ENCODE measurements at regions of chr22 and their contacts with region 1.

Region 1: DNA sequence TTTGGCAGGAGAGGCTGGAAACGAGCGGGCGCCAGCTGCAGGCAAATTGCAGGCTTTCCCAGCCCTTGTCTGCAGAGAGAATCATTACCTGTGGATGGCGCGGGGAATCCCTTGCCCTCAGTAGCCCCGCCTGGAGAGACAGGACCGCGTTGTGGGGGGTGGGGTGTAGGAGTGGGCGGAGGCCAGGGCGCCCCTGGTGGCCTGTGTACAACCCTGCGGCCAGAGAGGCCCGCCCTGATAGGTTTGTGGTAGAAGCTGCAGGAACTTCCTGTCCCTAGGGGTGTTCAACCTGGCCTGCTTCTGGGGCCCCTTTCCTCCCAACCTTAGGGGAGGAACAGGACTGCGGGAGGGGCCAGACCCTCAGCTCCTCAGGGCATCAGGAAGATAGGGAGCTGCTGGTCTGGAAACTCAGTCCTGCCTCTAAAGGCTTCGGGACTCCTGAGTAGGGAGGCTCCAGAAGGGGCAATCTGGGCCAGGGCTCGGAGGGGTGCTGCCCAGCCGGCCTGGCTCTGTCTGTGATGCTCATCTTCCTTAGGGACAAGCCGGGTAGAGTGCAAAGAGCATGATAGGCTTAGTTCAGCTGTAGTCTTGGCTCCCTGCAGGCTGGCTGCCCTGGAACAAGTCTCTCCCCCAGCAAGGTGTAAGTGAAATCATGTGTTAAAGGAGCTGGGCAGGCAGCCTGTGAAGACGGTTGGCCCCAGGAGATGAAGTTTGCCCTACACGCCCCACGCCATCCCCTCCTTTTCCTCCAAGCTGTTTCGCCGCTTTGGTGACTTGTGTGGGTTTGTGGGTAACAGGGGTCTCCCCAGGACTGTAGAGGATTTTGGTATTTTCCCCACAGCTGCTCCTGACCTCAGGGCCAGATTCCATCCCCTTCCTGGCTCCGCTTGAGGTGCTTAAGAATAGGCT is 24.1 kb upstream of the SUSD2 start:
- DNase-seq: peak; percentile 87 to 94 (median 87)
- H3K4me3 ChIP-seq: peak overlapping the region; percentile 92 to 96
- H3K4me3 Mint-ChIP-seq: peak overlapping the region; percentile 92 to 99 (median 94)
- H3K27ac ChIP-seq: peak overlapping the region; percentile 67
- H3K27ac Mint-ChIP-seq: peak overlapping the region; percentile 90 to 98 (median 93)
- H3K4me1 ChIP-seq: peaks cover 64% of the 10 kb centered on the region
- H3K4me1 Mint-ChIP-seq: peaks cover 36 to 88% (median 63%) of the 10 kb centered on the region in 4 donors
- H3K27me3 ChIP-seq: no peaks in the 10 kb centered on the region
- H3K27me3 Mint-ChIP-seq: no peaks in the 10 kb centered on the region

Region 2: GRCh38 chr22:24011735-24012068 is 145.5 kb before region 1 on chr22:
- CTCF ChIA-PET with region 1: interaction called, 4 read pairs
- POLR2A ChIA-PET with region 1: interaction called, 42 read pairs
- intact Hi-C with region 1: no loop called
- DNase-seq: peak in 1 of 5 donors; percentile 6
- H3K4me3 ChIP-seq: peak overlapping the region; percentile 68 to 86
- H3K4me3 Mint-ChIP-seq: peak overlapping the region; percentile 94 to 98 (median 98)
- H3K27ac ChIP-seq: peak overlapping the region; percentile 78
- H3K27ac Mint-ChIP-seq: peak overlapping the region; percentile 94 to 99 (median 97)
- H3K4me1 ChIP-seq: peaks cover 23% of the 10 kb centered on the region
- H3K4me1 Mint-ChIP-seq: peaks cover 26 to 57% (median 35%) of the 10 kb centered on the region in 4 donors
- H3K27me3 ChIP-seq: no peaks in the 10 kb centered on the region
- H3K27me3 Mint-ChIP-seq: peaks cover 0 to 5% of the 10 kb centered on the region in 2 donors

Region 3: DNA sequence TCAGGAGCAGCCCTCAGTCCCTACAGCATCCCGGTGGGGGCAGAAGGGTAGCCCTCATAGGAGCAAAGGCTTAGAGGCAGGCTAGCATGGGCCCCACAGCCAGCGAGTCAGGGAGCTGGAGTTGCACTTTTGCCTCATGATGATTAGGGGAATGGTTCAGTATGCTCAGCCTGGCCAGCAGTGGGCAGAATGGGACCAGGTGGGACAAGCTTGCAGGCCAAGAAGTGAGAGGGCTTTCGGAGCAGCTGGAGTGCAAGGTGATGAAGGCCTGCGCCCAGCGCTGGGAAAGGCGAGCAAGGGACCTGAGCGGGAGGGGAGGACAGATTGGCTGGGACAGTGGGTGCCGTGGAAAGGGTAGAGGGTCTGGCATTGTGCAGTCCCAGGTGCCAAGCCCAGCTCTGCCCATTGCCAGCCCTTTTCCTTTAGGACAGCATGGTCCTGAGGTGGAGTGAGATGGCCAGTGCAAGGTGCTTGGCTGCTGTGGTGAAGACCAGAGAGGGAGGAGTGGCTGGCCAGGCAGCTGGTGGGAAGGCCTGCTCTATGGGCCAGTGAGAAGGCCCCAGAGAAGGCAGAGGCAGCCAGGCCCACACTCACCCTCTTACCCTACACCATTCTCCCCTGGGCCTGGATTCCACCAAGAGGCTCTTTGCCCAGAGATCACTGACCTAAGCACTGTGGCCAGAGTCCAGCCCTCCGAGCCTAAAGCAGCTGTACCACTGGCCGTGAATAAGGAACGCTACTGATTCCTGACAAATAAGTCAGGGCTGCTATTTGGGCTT is 23.8 kb before region 1 on chr22:
- CTCF ChIA-PET with region 1: interaction called, 181 read pairs
- POLR2A ChIA-PET with region 1: interaction called, 176 read pairs
- intact Hi-C with region 1: loop called (anchors 2 kb)
- DNase-seq: peak in 3 of 5 donors; percentile 31 to 42 (median 38)
- H3K4me3 ChIP-seq: no peak overlapping the region
- H3K4me3 Mint-ChIP-seq: peak overlapping the region in 1 of 8 donors; percentile 42
- H3K27ac ChIP-seq: no peak overlapping the region
- H3K27ac Mint-ChIP-seq: peak overlapping the region; percentile 30 to 88 (median 51)
- H3K4me1 ChIP-seq: peaks cover 9% of the 10 kb centered on the region
- H3K4me1 Mint-ChIP-seq: peaks cover 4 to 19% (median 10%) of the 10 kb centered on the region in 4 donors
- H3K27me3 ChIP-seq: no peaks in the 10 kb centered on the region
- H3K27me3 Mint-ChIP-seq: no peaks in the 10 kb centered on the region

Region 4: GRCh38 chr22:24146194-24146616 is 11.0 kb before region 1 on chr22:
- CTCF ChIA-PET with region 1: interaction called, 181 read pairs
- POLR2A ChIA-PET with region 1: interaction called, 176 read pairs
- intact Hi-C with region 1: loop called (anchors 2 kb)
- DNase-seq: peak in 3 of 5 donors; percentile 13 to 23 (median 15)
- H3K4me3 ChIP-seq: no peak overlapping the region
- H3K4me3 Mint-ChIP-seq: peak overlapping the region in 7 of 8 donors; percentile 37 to 69 (median 45)
- H3K27ac ChIP-seq: no peak overlapping the region
- H3K27ac Mint-ChIP-seq: peak overlapping the region; percentile 76 to 91 (median 85)
- H3K4me1 ChIP-seq: peaks cover 70% of the 10 kb centered on the region
- H3K4me1 Mint-ChIP-seq: peaks cover 36 to 76% (median 60%) of the 10 kb centered on the region in 4 donors
- H3K27me3 ChIP-seq: no peaks in the 10 kb centered on the region
- H3K27me3 Mint-ChIP-seq: no peaks in the 10 kb centered on the region

Region 5: DNA sequence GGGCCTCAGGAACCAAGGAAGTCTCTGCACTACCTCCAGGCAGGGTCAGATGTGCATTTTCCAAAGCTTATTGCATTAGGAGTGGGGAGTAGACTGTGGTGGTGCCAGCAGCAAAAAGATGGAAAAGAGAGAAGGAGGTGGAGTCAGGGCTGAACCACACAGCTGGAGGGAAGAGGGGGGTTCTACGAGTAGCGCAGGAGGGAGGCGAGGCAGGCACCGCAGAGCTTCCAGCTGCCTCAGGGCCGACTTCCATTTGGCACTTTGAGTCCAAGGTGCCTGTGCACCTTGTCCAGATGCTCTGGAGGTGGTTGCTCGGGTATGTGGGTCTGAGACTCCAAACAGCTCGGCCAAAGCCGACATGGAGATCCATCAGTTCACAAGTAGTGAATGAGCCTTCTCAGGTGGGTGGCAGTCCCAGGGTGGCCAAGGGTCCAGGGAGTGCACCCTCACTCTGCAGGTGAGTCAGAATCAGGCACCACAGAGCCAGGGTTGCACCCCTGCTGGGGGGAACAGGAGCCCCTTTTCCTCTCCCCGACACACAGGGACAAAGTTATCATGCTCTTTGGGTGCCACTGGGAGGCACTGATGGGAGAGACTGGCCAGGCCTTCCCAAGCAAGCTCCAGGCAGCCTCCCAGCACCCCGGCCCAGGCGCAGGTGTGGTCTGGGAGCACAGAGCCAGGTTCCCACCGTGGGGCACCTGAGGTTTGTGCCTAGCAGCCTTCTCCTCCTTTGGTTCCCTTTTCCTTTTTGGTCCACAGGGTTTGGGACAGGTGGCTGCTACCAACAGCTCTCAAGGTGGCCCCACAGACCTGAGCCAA is 57.5 kb after region 1 on chr22:
- CTCF ChIA-PET with region 1: no interaction called
- POLR2A ChIA-PET with region 1: no interaction called
- intact Hi-C with region 1: no loop called
- DNase-seq: no peak
- H3K4me3 ChIP-seq: no peak overlapping the region
- H3K4me3 Mint-ChIP-seq: no peak overlapping the region
- H3K27ac ChIP-seq: no peak overlapping the region
- H3K27ac Mint-ChIP-seq: no peak overlapping the region
- H3K4me1 ChIP-seq: no peaks in the 10 kb centered on the region
- H3K4me1 Mint-ChIP-seq: no peaks in the 10 kb centered on the region
- H3K27me3 ChIP-seq: no peaks in the 10 kb centered on the region
- H3K27me3 Mint-ChIP-seq: peaks cover 0 to 4% of the 10 kb centered on the region in 2 donors

Region 6: GRCh38 chr22:24244101-24244787 is 87.1 kb after region 1 on chr22:
- CTCF ChIA-PET with region 1: interaction called, 5 read pairs
- POLR2A ChIA-PET with region 1: interaction called, 11 read pairs
- intact Hi-C with region 1: no loop called
- DNase-seq: no peak
- H3K4me3 ChIP-seq: no peak overlapping the region
- H3K4me3 Mint-ChIP-seq: peak overlapping the region in 4 of 8 donors; percentile 10 to 61 (median 52)
- H3K27ac ChIP-seq: no peak overlapping the region
- H3K27ac Mint-ChIP-seq: peak overlapping the region in 2 of 7 donors; percentile 15 to 79
- H3K4me1 ChIP-seq: peaks cover 25% of the 10 kb centered on the region
- H3K4me1 Mint-ChIP-seq: peaks cover 15 to 42% (median 27%) of the 10 kb centered on the region in 4 donors
- H3K27me3 ChIP-seq: no peaks in the 10 kb centered on the region
- H3K27me3 Mint-ChIP-seq: no peaks in the 10 kb centered on the region

Measured in CD4-positive, alpha-beta memory T cell (primary cell).